ENCODE measurements at regions of chr22 and their contacts with region 1.

Region 1: GRCh38 chr22:17562906-17563870 is at the start of gene SLC25A18:
- DNase-seq: no peak
- H3K4me3 ChIP-seq: no peak within 1 kb of the TSS
- H3K27ac ChIP-seq: no peak within 1 kb of the TSS
- H3K4me1 ChIP-seq: no peaks in the 10 kb centered on the region
- H3K27me3 ChIP-seq: no peaks in the 10 kb centered on the region
- CTCF ChIP-seq: 0 out of 2 replicates have a peak, but pooled peaks have one; percentile 21
- total RNA-seq, gene SLC25A18: 0.35 and 0.45 TPM in 2 replicates

Region 2: DNA sequence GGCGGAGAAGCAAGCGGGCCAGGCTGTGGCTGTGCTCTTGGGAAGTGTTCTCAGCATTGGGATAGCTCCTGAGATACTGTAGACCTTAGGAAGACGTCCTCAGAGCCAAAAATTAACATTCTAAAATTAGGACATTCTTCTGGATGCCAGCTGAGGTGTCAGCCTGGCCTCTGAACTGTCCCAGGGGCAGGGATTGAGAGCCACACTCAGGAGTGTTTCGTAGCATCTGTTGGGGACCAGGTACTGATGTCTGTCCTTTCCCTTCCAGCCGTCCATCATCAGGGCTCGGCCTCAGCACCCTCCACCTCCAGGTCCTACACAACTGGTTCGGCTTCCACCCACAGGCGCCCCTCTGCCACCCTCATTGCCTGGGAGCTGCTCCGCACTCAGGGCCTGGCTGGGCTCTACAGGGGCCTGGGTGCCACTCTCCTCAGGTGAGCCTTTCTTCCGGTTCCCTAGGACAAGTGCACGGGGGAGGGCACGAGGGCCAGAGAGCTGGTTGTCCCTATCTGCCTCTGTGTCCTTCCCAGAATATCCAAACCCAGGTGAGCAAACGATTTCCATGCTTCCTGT is 23.8 kb after region 1 on chr22:
- CTCF ChIA-PET with region 1: no interaction called
- POLR2A ChIA-PET with region 1: no interaction called
- intact Hi-C with region 1: no loop called
- DNase-seq: no peak
- H3K4me3 ChIP-seq: no peak overlapping the region
- H3K27ac ChIP-seq: no peak overlapping the region
- H3K4me1 ChIP-seq: no peaks in the 10 kb centered on the region
- H3K27me3 ChIP-seq: no peaks in the 10 kb centered on the region
- CTCF ChIP-seq: no peak

Region 3: GRCh38 chr22:17597217-17597616 is 34.0 kb after region 1 on chr22:
- CTCF ChIA-PET with region 1: no interaction called
- POLR2A ChIA-PET with region 1: no interaction called
- intact Hi-C with region 1: no loop called
- DNase-seq: no peak
- H3K4me3 ChIP-seq: no peak overlapping the region
- H3K27ac ChIP-seq: no peak overlapping the region
- H3K4me1 ChIP-seq: no peaks in the 10 kb centered on the region
- H3K27me3 ChIP-seq: no peaks in the 10 kb centered on the region
- CTCF ChIP-seq: no peak

Region 4: GRCh38 chr22:17725500-17725796 is 162.3 kb after region 1 on chr22:
- CTCF ChIA-PET with region 1: no interaction called
- POLR2A ChIA-PET with region 1: interaction called, 27 read pairs
- intact Hi-C with region 1: no loop called
- DNase-seq: no peak
- H3K4me3 ChIP-seq: no peak overlapping the region
- H3K27ac ChIP-seq: no peak overlapping the region
- H3K4me1 ChIP-seq: peaks cover 4% of the 10 kb centered on the region
- H3K27me3 ChIP-seq: no peaks in the 10 kb centered on the region
- CTCF ChIP-seq: no peak

Region 5: DNA sequence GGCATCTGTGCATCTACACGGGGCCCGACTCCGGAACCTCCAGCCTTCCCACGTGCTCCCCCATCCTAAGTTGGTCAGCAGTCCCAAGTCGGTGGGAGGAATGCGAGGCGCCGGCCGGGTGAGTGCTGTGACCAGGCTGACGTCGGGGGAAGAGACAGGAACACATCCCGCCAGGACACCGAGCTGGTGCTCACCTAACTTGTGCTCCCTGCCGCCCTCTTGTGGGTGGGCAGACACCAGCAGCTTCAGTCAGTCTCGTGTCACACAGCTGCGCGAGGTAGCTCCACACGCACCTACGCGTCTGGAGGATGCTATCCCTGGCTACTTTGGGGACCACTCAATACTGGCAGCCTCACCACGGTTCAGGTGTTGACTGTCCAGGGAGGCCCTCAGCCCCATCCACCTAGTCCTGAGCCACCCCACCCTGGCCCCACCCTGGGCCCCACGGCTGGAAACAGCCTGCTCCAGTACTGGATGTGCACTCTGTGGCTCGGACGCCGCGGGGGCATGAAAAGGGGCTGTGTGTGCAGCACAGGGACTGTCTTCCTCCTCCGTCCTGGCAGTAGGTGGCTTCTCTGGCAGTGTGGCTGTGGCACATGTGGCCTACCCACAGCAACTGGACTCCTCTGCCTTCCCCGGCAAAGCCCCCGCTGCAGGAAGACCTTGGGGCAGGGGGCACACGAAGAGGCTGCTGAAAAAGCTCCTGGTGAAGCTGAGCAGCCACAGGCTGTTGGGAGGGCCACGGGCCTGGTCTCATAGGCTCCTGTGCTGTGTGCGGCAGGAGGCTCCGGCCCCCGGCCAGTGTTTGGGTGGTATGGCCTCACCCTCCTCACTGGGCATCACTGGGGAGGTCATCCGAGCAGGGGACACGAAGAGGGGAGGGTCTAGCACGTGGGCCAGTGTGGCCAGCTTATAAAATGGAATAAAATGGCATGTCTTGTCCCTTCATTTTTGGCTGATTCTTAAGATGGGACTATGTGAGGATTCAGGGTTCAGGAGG is 222.3 kb after region 1 on chr22:
- CTCF ChIA-PET with region 1: interaction called, 10 read pairs
- POLR2A ChIA-PET with region 1: no interaction called
- intact Hi-C with region 1: no loop called
- DNase-seq: peak; percentile 50
- H3K4me3 ChIP-seq: no peak overlapping the region
- H3K27ac ChIP-seq: no peak overlapping the region
- H3K4me1 ChIP-seq: peaks cover 23% of the 10 kb centered on the region
- H3K27me3 ChIP-seq: no peaks in the 10 kb centered on the region
- CTCF ChIP-seq: peak; percentile 64

Measured in A673 (cell line).